GM12878 (cell line): ENCODE measurements at regions of chr6 and their contacts with region 1.

Region 1: DNA sequence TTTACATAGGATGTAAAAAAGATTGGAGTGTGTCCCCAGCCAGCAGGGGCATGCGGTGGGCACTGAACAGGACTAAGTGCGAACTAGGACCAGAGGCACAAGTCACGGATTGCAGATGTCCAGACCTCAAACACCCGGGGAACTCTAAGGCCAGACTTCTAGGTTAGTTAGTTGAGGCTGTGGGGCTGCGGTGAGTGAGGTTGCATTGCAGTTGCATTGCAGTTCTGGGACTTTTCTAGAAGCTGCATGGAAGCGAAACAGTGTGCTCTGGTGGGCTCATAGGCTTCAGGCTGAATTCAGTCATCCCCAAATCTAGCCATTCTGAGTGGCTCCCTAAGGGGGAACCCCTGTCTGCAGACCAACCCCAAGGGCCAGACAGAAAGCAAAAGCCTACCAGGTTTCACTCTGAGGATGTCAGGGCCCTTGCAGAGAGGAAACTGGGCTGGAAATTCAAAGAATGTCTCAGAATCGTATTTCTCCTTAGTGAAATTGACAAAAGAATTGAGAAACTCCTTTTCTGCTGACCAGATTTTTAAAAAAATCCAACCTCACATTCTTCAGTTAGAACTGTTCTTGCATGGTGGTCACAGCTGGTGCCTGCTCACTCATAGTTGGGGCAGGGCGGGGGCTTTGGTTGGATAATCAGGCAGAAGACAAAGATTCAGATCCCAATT is 182.8 kb downstream of the ZDHHC14 start:
- DNase-seq: peak; percentile 93
- ATAC-seq: peak; percentile 81
- H3K4me3 ChIP-seq: no peak overlapping the region; the same call in 1 of the 2 replicates
- H3K27ac ChIP-seq: peak overlapping the region; percentile 38; the same call in 1 of the 2 replicates
- H3K4me1 ChIP-seq: peaks cover 52% of the 10 kb centered on the region
- H3K27me3 ChIP-seq: no peaks in the 10 kb centered on the region
- CTCF ChIP-seq: peak in 2 of 3 experiments; percentile 26 to 36; a peak in 3 of 6 replicates
- EP300 ChIP-seq: peak; percentile 88 to 95
- POLR2A ChIP-seq: no peak
- RAD21 ChIP-seq: peak; percentile 45

Region 2: DNA sequence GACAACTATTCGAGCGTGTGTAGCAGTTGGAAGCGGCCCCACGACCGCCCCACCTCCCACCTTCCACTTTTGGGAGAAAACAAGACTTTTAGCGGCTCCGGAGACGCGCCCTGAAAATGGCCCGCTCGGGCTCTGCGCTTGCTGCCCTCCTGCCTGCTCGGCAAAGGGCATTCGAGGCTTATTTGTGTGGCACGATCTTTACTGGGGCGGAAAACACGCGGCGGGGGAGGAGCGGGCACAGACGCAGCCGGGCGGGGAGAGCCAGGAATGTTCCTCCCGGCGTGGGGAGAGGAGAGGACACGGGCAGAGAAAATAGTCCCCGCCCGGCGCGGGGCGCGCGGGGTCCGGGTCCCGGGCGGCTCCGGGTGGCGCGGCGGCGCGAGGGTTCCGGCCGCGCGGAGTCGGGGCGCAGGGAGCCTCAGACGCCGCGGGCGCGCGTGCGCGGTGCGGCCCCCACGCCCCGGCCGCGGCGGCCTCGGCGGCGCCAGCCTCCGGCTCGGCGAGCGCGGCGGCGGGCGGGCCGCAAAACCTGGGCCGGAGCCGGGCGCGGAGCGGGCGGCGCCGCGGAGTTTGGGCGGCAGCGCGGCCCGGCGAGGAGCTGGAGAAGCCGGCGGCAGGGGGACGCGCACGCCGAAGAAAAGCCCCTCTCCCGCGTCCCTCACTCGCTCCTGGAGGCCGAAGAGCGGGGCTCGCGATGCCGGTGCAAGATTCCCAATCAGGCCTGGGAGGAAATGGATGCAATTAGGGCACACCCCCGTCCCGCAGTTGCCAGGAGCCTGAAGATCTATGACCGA is 876.6 kb before region 1 on chr6:
- CTCF ChIA-PET with region 1: no interaction called
- POLR2A ChIA-PET with region 1: no interaction called
- RAD21 ChIA-PET with region 1: no interaction called
- SMC1A ChIA-PET with region 1: no interaction called
- in situ Hi-C with region 1: no loop called
- intact Hi-C with region 1: loop called (anchors 5 kb)
- DNase-seq: no peak
- ATAC-seq: peak; percentile 69
- H3K4me3 ChIP-seq: peak overlapping the region; percentile 93
- H3K27ac ChIP-seq: peak overlapping the region; percentile 98
- H3K4me1 ChIP-seq: peaks cover 48% of the 10 kb centered on the region
- H3K27me3 ChIP-seq: no peaks in the 10 kb centered on the region
- CTCF ChIP-seq: no peak
- EP300 ChIP-seq: peak in 1 of 2 experiments; percentile 27; a peak in 1 of 4 replicates
- POLR2A ChIP-seq: peak; percentile 85
- RAD21 ChIP-seq: no peak; the same call in 1 of the 2 replicates

Region 3: DNA sequence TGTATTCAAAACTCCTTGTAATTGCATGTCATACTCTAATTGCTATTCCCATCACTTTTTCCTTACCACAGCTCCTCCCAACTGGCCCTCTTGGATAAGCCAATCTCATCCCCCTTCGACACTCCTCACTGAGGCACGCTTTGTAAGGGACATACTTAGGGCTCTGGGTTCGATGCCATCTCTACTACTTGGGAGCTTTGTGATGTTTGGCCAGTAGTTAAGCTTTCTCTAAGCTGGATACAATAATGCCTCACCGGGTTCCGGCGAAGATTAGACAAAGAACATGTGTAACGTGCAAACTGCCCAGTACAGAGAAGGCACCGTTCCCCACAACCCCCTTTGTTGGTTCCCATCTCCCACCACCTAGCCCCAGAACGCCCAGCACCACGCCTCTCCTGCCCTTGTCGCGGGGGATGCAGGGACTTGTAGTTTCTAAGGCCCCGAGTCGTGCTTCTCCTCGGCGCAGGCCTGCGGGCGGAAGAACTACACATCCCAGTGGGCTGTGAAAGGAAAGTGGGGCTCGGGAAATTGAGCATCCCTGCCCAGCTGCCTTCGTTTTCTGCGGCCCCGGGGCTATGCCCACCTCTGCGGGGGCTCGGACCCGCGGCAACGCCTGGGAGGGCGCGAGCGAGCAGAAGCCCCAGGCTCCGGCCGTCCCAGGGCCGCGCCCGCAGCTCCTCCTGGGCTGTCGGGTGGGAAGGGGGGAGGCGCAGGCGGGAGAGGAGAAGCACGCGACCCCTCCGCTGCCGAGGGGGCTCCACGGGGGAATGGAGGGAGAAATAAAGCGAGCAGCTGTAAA is 183.9 kb before region 1 on chr6:
- CTCF ChIA-PET with region 1: interaction called, 8 read pairs
- POLR2A ChIA-PET with region 1: interaction called, 5 read pairs
- RAD21 ChIA-PET with region 1: interaction called, 12 read pairs
- SMC1A ChIA-PET with region 1: interaction called, 11 read pairs
- in situ Hi-C with region 1: no loop called
- intact Hi-C with region 1: loop called (anchors 2 kb)
- DNase-seq: peak; percentile 65
- ATAC-seq: peak; percentile 86
- H3K4me3 ChIP-seq: peak overlapping the region; percentile 98
- H3K27ac ChIP-seq: peak overlapping the region; percentile 50; the same call in 1 of the 2 replicates
- H3K4me1 ChIP-seq: no peaks in the 10 kb centered on the region
- H3K27me3 ChIP-seq: peaks cover 0 to 4% of the 10 kb centered on the region in 2 experiments; a peak in 1 of 4 replicates
- CTCF ChIP-seq: no peak
- EP300 ChIP-seq: no peak
- POLR2A ChIP-seq: 0 out of 2 replicates have a peak, but pooled peaks have one; percentile 42
- RAD21 ChIP-seq: no peak

Region 4: GRCh38 chr6:157443066-157443800 is 120.5 kb before region 1 on chr6:
- CTCF ChIA-PET with region 1: no interaction called
- POLR2A ChIA-PET with region 1: no interaction called
- RAD21 ChIA-PET with region 1: interaction called, 3 read pairs
- SMC1A ChIA-PET with region 1: interaction called, 6 read pairs
- in situ Hi-C with region 1: no loop called
- intact Hi-C with region 1: loop called (anchors 1 kb)
- DNase-seq: peak; percentile 80
- ATAC-seq: peak; percentile 97
- H3K4me3 ChIP-seq: no peak overlapping the region
- H3K27ac ChIP-seq: no peak overlapping the region
- H3K4me1 ChIP-seq: 0 out of 2 replicates have a peak, but pooled peaks cover 3% of the 10 kb centered on the region
- H3K27me3 ChIP-seq: no peaks in the 10 kb centered on the region
- CTCF ChIP-seq: no peak
- EP300 ChIP-seq: peak; percentile 84 to 87
- POLR2A ChIP-seq: no peak
- RAD21 ChIP-seq: no peak

Region 5: DNA sequence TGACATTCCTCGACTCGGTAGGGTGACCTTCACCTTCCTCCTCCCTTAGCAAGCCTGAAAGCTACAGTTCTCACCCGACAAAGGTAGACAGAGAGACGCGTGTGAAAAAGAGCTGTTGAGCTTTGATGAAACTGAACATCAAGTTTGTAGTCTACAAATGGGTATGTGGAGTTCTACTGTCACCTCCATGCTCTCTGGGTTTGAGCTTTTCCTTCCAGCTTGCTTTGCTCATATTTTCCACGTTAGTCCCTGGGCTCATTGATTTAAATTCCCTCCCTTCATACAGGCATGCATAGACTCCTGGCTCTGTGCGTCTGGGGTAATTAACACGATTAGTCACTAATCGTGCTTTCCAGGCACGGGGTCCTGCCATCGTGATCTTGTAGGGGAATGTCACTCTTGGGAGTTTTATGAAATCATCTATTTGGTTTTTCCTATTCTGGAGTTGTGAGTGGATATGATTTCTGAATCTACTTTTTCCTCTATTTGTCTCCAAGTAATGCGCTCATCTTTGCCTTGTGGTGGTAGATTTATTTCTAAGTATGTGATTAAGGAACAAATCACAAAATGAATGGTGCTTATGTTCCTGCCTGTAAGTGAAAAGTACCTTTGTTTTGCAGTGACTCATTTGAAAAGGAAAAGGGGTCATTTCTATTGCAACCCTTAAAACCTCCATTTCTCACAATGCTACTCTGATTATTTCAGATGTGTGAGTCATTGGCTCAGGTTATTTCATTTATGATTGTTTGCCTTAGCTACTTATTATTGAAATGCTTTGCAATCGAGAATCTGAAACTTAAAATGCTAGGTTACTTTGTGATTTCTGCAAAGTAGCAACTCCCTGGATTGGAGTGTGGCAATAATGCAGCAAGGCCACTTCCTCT is 28.2 kb before region 1 on chr6:
- CTCF ChIA-PET with region 1: interaction called, 12 read pairs
- POLR2A ChIA-PET with region 1: interaction called, 4 read pairs
- RAD21 ChIA-PET with region 1: interaction called, 22 read pairs
- SMC1A ChIA-PET with region 1: interaction called, 25 read pairs
- in situ Hi-C with region 1: no loop called
- intact Hi-C with region 1: loop called (anchors 1 kb)
- DNase-seq: peak; percentile 71
- ATAC-seq: peak; percentile 85
- H3K4me3 ChIP-seq: no peak overlapping the region
- H3K27ac ChIP-seq: no peak overlapping the region; the same call in 1 of the 2 replicates
- H3K4me1 ChIP-seq: peaks cover 8% of the 10 kb centered on the region; the same call in 1 of the 2 replicates
- H3K27me3 ChIP-seq: no peaks in the 10 kb centered on the region
- CTCF ChIP-seq: no peak
- EP300 ChIP-seq: peak; percentile 85 to 91; a peak in 3 of 4 replicates
- POLR2A ChIP-seq: no peak
- RAD21 ChIP-seq: no peak

Region 6: DNA sequence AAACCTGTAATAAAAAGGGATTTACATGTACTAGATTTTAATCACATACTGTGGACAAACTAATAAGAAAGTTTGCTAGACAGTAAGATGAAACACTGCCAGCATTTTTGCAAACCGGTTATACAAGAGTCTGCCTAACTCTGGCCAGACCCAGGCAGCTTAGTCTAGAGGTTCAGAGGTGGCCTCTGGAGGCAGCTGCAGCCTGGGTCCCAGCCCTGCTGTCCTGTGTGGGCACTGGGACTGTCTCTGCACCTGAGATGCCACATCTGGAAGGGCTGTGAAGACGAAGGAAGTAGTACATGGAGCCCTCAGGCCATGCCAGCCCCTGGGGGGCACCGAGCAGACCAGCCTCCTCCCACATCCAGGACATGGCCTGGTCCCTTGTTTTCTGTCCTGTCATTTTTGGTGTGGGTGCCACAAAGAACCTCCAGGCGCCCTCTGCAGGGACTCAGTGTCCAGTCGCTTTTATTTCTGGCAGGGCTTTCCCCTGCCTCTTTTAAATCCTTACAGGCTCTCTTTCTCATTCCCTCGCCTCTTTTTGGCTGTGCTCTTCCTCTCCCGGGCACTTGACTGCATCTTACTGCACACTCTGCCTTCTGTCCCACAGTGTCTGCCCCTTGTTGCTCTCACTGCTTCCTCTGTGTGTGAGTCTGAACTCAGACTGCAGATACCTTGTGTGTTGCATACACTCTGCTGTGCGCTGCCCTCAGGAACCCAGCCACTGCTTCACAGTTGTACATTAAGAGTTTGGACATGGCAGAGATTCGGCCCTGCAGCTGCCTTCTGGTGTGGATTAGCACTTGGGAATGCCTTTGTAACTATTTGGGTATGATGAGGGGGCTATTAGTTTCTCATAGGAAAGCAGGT is 33.9 kb after region 1 on chr6:
- CTCF ChIA-PET with region 1: interaction called, 26 read pairs
- POLR2A ChIA-PET with region 1: interaction called, 4 read pairs
- RAD21 ChIA-PET with region 1: interaction called, 17 read pairs
- SMC1A ChIA-PET with region 1: interaction called, 41 read pairs
- in situ Hi-C with region 1: no loop called
- intact Hi-C with region 1: loop called (anchors 1 kb)
- DNase-seq: no peak
- ATAC-seq: peak; percentile 91
- H3K4me3 ChIP-seq: no peak overlapping the region
- H3K27ac ChIP-seq: no peak overlapping the region
- H3K4me1 ChIP-seq: no peaks in the 10 kb centered on the region; the same call in 1 of the 2 replicates
- H3K27me3 ChIP-seq: no peaks in the 10 kb centered on the region
- CTCF ChIP-seq: peak; percentile 51 to 72 (median 56); a peak in 5 of 6 replicates
- EP300 ChIP-seq: no peak
- POLR2A ChIP-seq: no peak
- RAD21 ChIP-seq: peak; percentile 75

Region 7: GRCh38 chr6:157764178-157765033 is 200.7 kb after region 1 on chr6:
- CTCF ChIA-PET with region 1: no interaction called
- POLR2A ChIA-PET with region 1: no interaction called
- RAD21 ChIA-PET with region 1: interaction called, 9 read pairs
- SMC1A ChIA-PET with region 1: interaction called, 5 read pairs
- in situ Hi-C with region 1: loop called (anchors 5 kb)
- intact Hi-C with region 1: loop called (anchors 5 kb)
- DNase-seq: peak; percentile 95
- ATAC-seq: peak; percentile 68
- H3K4me3 ChIP-seq: peak overlapping the region; percentile 53; the same call in 1 of the 2 replicates
- H3K27ac ChIP-seq: peak overlapping the region; percentile 76
- H3K4me1 ChIP-seq: peaks cover 72% of the 10 kb centered on the region
- H3K27me3 ChIP-seq: no peaks in the 10 kb centered on the region
- CTCF ChIP-seq: no peak
- EP300 ChIP-seq: peak; percentile 96 to 97
- POLR2A ChIP-seq: no peak
- RAD21 ChIP-seq: 0 out of 2 replicates have a peak, but pooled peaks have one; percentile 2